ENCODE measurements at regions of chr12 and their contacts with region 1.

Region 1: GRCh38 chr12:53746592-53747092 is 5.1 kb downstream of the CISTR start:
- DNase-seq: peak; percentile 96
- H3K4me3 ChIP-seq: no peak overlapping the region
- H3K27ac ChIP-seq: no peak overlapping the region
- H3K4me1 ChIP-seq: peaks cover 0 to 21% (median 19%) of the 10 kb centered on the region in 4 donors
- H3K27me3 ChIP-seq: peaks cover 10 to 49% (median 33%) of the 10 kb centered on the region in 3 donors
- CTCF ChIP-seq: peak; percentile 100
- EP300 ChIP-seq: no peak
- POLR2A ChIP-seq: no peak

Region 2: GRCh38 chr12:53241623-53242412 is 504.8 kb before region 1 on chr12:
- intact Hi-C with region 1: no loop called
- DNase-seq: no peak
- H3K4me3 ChIP-seq: no peak overlapping the region
- H3K27ac ChIP-seq: no peak overlapping the region
- H3K4me1 ChIP-seq: no peaks in the 10 kb centered on the region
- H3K27me3 ChIP-seq: peaks cover 0 to 11% (median 0%) of the 10 kb centered on the region in 3 donors
- CTCF ChIP-seq: no peak
- EP300 ChIP-seq: no peak
- POLR2A ChIP-seq: no peak

Region 3: DNA sequence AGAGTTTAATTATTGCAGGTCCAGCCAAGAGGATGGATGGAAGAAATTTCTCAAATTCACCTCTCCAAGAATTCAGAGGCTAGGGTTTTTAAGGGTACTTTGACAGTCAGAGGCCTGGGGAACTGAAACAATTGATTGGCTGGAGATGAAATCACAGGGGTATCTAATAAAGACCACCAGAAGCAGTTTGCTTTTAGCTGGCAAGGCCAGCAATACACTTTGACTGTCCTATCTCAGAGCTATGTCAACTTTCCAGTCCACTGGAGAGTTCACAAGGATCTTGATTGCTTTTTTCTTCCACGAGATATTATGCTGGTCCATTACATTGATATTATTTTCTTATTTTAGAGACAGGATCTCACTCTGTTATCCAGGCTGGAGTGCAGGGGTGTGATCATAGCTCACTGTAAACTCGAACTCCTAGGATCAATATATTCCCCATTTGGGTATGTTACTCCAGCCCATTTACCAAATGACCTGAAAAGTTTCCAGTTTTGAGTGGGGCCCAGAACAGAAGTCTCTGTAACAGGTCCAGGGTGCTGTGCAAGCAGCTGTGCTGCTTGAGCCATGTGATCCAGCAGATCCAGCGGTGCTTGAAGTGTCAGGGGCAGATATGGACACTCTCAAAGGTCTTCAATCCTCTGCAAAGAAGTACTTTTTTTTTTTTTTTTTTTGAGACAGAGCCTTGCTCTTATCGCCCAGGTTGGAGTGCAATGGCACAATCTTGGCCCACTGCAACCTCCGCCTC is 103.2 kb before region 1 on chr12:
- intact Hi-C with region 1: no loop called
- DNase-seq: no peak
- H3K4me3 ChIP-seq: no peak overlapping the region
- H3K27ac ChIP-seq: no peak overlapping the region
- H3K4me1 ChIP-seq: no peaks in the 10 kb centered on the region
- H3K27me3 ChIP-seq: no peaks in the 10 kb centered on the region
- CTCF ChIP-seq: no peak
- EP300 ChIP-seq: no peak
- POLR2A ChIP-seq: no peak

Region 4: GRCh38 chr12:53701518-53702260 is 45.0 kb before region 1 on chr12:
- intact Hi-C with region 1: loop called (anchors 1 kb)
- DNase-seq: peak; percentile 89
- H3K4me3 ChIP-seq: no peak overlapping the region
- H3K27ac ChIP-seq: no peak overlapping the region
- H3K4me1 ChIP-seq: peaks cover 0 to 4% (median 2%) of the 10 kb centered on the region in 4 donors
- H3K27me3 ChIP-seq: peaks cover 16 to 88% (median 56%) of the 10 kb centered on the region in 3 donors
- CTCF ChIP-seq: peak; percentile 75 to 86 (median 84)
- EP300 ChIP-seq: no peak
- POLR2A ChIP-seq: no peak

Measured in sigmoid colon (tissue), 7 donors.